CD4-positive, alpha-beta memory T cell (primary cell): ENCODE measurements at regions of chr14 and their contacts with region 1.

Region 1: GRCh38 chr14:34875031-34875922 is at the start of gene BAZ1A:
- DNase-seq: peak; percentile 53 to 67 (median 57)
- H3K4me3 ChIP-seq: peak within 1 kb of the TSS; percentile 64 to 98
- H3K4me3 Mint-ChIP-seq: peak within 1 kb of the TSS; percentile 95 to 100 (median 100)
- H3K27ac ChIP-seq: peak within 1 kb of the TSS; percentile 100
- H3K27ac Mint-ChIP-seq: peak within 1 kb of the TSS; percentile 98 to 100 (median 99)
- H3K4me1 ChIP-seq: peaks cover 38% of the 10 kb centered on the region
- H3K4me1 Mint-ChIP-seq: peaks cover 17 to 48% (median 33%) of the 10 kb centered on the region in 4 donors
- H3K27me3 ChIP-seq: no peaks in the 10 kb centered on the region
- H3K27me3 Mint-ChIP-seq: no peaks in the 10 kb centered on the region
- total RNA-seq, gene BAZ1A: 54.1 to 56.4 TPM

Region 2: GRCh38 chr14:34671716-34672115 is 203.6 kb before region 1 on chr14:
- CTCF ChIA-PET with region 1: interaction called, 3 read pairs
- POLR2A ChIA-PET with region 1: no interaction called
- intact Hi-C with region 1: loop called (anchors 5 kb)
- DNase-seq: no peak
- H3K4me3 ChIP-seq: no peak overlapping the region
- H3K4me3 Mint-ChIP-seq: no peak overlapping the region
- H3K27ac ChIP-seq: no peak overlapping the region
- H3K27ac Mint-ChIP-seq: no peak overlapping the region
- H3K4me1 ChIP-seq: peaks cover 3% of the 10 kb centered on the region
- H3K4me1 Mint-ChIP-seq: peaks cover 0 to 3% (median 0%) of the 10 kb centered on the region in 4 donors
- H3K27me3 ChIP-seq: no peaks in the 10 kb centered on the region
- H3K27me3 Mint-ChIP-seq: no peaks in the 10 kb centered on the region

Region 3: GRCh38 chr14:34804933-34805332 is 70.3 kb before region 1 on chr14:
- CTCF ChIA-PET with region 1: no interaction called
- POLR2A ChIA-PET with region 1: interaction called, 4 read pairs
- intact Hi-C with region 1: loop called (anchors 10 kb)
- DNase-seq: no peak
- H3K4me3 ChIP-seq: no peak overlapping the region
- H3K4me3 Mint-ChIP-seq: no peak overlapping the region
- H3K27ac ChIP-seq: no peak overlapping the region
- H3K27ac Mint-ChIP-seq: peak overlapping the region in 2 of 7 donors; percentile 10 to 29
- H3K4me1 ChIP-seq: no peaks in the 10 kb centered on the region
- H3K4me1 Mint-ChIP-seq: peaks cover 0 to 5% (median 3%) of the 10 kb centered on the region in 4 donors
- H3K27me3 ChIP-seq: no peaks in the 10 kb centered on the region
- H3K27me3 Mint-ChIP-seq: no peaks in the 10 kb centered on the region

Region 4: DNA sequence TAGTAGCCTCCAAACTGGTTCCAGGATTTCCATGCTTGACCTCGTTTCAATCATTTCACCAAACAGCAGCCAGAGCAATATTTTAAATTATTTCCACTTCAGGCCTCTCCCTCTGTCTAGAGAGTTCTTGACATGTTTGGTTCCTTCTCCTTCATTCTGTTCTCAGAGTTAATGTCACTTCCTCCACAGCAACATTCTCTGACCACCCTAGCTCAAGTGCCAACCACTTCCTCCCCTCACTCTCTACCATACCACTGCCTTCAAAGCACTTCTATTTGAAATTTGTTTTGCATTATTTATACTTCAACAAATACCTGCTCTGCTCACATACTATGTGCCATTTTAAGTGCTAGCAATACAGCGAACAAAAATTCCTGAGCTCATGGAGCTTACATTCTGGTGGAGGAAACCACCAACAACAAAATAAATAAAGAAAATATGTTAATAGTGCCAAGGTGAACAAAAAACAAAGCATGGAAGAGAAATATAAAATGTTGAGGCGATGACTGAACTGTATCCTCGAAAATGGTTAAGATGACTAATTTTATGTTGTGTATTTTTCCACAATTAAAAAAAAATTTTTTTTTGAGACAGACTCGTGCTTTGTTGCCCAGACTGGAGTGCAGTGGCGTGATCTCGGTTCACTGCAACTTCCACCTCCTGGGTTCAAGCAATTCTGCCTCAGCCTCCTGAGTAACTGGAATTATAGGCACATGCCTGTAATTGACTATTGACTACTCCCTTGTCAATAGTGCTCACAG is 17.4 kb before region 1 on chr14:
- CTCF ChIA-PET with region 1: interaction called, 4 read pairs
- POLR2A ChIA-PET with region 1: interaction called, 15 read pairs
- intact Hi-C with region 1: loop called (anchors 2 kb)
- DNase-seq: peak; percentile 42 to 61 (median 56)
- H3K4me3 ChIP-seq: no peak overlapping the region
- H3K4me3 Mint-ChIP-seq: peak overlapping the region in 7 of 8 donors; percentile 48 to 70 (median 66)
- H3K27ac ChIP-seq: peak overlapping the region; percentile 2
- H3K27ac Mint-ChIP-seq: peak overlapping the region; percentile 50 to 84 (median 79)
- H3K4me1 ChIP-seq: peaks cover 23% of the 10 kb centered on the region
- H3K4me1 Mint-ChIP-seq: peaks cover 24 to 47% (median 38%) of the 10 kb centered on the region in 4 donors
- H3K27me3 ChIP-seq: no peaks in the 10 kb centered on the region
- H3K27me3 Mint-ChIP-seq: no peaks in the 10 kb centered on the region

Region 5: DNA sequence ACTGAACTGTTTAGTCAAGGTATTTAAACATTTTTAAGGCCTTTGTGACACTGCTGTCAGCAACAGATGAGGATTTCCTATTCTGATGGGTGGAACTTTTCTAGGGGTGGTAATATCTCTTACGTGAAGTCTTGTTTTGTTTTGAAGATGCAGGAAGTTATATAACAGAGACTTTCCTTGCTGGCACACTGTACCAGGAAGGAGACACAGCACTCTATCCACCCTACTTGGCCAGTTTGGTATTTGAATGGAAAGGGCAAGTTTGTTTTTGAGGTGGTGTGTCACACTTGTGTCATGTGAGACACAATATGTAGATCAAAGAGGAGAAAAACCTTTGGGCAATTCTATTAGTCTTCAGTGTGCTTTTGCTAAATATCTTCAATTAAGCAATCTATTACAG is 55.9 kb after region 1 on chr14:
- CTCF ChIA-PET with region 1: interaction called, 5 read pairs
- POLR2A ChIA-PET with region 1: interaction called, 49 read pairs
- intact Hi-C with region 1: loop called (anchors 1 kb)
- DNase-seq: peak; percentile 78 to 85 (median 84)
- H3K4me3 ChIP-seq: peak overlapping the region in 1 of 2 donors; percentile 53
- H3K4me3 Mint-ChIP-seq: peak overlapping the region; percentile 42 to 79 (median 50)
- H3K27ac ChIP-seq: peak overlapping the region; percentile 79
- H3K27ac Mint-ChIP-seq: peak overlapping the region; percentile 90 to 100 (median 98)
- H3K4me1 ChIP-seq: peaks cover 34% of the 10 kb centered on the region
- H3K4me1 Mint-ChIP-seq: peaks cover 22 to 37% (median 30%) of the 10 kb centered on the region in 4 donors
- H3K27me3 ChIP-seq: no peaks in the 10 kb centered on the region
- H3K27me3 Mint-ChIP-seq: no peaks in the 10 kb centered on the region

Region 6: DNA sequence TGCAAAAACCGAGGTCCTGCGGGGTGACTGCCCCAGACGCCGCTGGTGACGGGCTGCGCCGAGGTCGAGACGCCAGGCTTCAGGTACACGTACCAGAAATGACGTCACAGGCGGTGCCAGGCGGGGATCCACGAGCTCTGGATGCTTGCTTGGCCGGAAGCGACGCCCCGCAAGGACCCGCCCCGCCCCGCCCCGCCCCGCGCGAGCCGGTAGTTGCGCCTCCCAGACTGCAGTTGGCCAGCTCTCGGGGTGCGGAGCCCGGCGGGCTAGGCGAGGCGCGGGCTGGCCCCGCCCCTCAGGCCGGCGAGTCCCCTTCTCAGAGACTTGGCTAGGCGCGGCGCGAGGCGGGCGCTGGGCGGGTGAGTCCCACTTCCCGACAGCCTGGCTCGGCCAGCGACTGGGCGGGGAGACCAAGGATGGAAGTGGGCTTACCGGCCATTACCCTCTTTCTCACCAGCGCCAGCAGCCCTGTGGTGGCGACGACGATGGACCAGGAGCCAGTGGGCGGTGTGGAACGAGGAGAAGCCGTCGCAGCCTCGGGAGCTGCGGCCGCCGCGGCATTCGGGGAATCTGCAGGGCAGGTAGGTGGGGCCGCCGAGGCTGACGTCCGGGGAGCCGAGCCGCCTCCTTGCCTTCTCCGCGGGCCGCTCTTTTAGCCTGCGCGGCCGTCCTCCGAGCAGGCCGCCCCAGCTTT is 170.9 kb after region 1 on chr14 and contains the start of gene FAM177A1:
- CTCF ChIA-PET with region 1: interaction called, 5 read pairs
- POLR2A ChIA-PET with region 1: interaction called, 16 read pairs
- intact Hi-C with region 1: loop called (anchors 1 kb)
- DNase-seq: peak; percentile 98 to 100 (median 99)
- H3K4me3 ChIP-seq: peak within 1 kb of the TSS; percentile 76 to 92
- H3K4me3 Mint-ChIP-seq: peak within 1 kb of the TSS; percentile 87 to 100 (median 96)
- H3K27ac ChIP-seq: peak within 1 kb of the TSS; percentile 98
- H3K27ac Mint-ChIP-seq: peak within 1 kb of the TSS; percentile 95 to 100 (median 99)
- H3K4me1 ChIP-seq: peaks cover 24% of the 10 kb centered on the region
- H3K4me1 Mint-ChIP-seq: peaks cover 19 to 38% (median 30%) of the 10 kb centered on the region in 4 donors
- H3K27me3 ChIP-seq: no peaks in the 10 kb centered on the region
- H3K27me3 Mint-ChIP-seq: no peaks in the 10 kb centered on the region
- total RNA-seq, gene FAM177A1: 35.2 to 41.5 TPM